Activated T-helper 1 cell treated with anti-CD3 and anti-CD28 coated beads, Interleukin-12 subunit alpha, Interleukin-12 subunit beta, Interleukin-2, Interleukin-4 antibody, amounts not matched to agents 30 ng/mL and 10 ng/mL and 1 ng/mL, durations not matched to agents 14 hours and 24 hours and 36 hours (primary cell): ENCODE measurements at regions of chr3 and their contacts with region 1.

Region 1: DNA sequence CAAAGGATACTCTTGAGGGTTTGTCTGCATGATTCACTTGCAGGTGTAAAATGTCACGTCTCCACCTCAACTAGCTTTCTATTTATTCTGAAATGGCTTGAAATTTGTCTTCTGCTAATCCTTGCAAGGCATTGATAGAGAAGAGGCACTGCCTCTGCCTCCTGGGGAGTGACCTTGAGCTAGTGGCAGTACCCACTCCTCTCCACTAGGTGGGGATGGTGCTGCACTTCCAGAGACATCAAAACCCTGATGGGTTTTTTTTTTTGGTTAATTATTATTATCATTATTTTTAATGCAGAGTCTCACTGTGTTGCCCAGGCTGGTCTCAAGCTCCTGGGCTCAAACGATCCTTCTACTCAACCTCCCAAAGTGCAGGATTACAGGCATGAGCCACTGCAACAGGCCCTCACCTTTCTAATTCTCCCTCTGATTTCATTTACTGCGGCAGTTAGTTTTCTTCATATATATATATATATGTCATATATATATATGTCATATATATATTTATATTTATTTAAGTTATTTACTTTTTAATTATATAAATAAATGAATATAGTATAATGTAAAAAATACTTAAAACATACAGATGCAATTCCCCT is 117.6 kb upstream of the EIF1B start:
- DNase-seq: peak; percentile 35
- H3K4me3 Mint-ChIP-seq: no peak overlapping the region
- H3K27ac Mint-ChIP-seq: no peak overlapping the region
- H3K4me1 Mint-ChIP-seq: no peaks in the 10 kb centered on the region
- H3K27me3 Mint-ChIP-seq: peaks cover 4% of the 10 kb centered on the region

Region 2: GRCh38 chr3:40054568-40055222 is 137.3 kb before region 1 on chr3:
- intact Hi-C with region 1: no loop called
- DNase-seq: no peak
- H3K4me3 Mint-ChIP-seq: no peak overlapping the region
- H3K27ac Mint-ChIP-seq: no peak overlapping the region
- H3K4me1 Mint-ChIP-seq: no peaks in the 10 kb centered on the region
- H3K27me3 Mint-ChIP-seq: peaks cover 2% of the 10 kb centered on the region

Region 3: GRCh38 chr3:41881233-41881821 is 1689.4 kb after region 1 on chr3:
- intact Hi-C with region 1: loop called (anchors 5 kb)
- DNase-seq: no peak
- H3K4me3 Mint-ChIP-seq: no peak overlapping the region
- H3K27ac Mint-ChIP-seq: no peak overlapping the region
- H3K4me1 Mint-ChIP-seq: no peaks in the 10 kb centered on the region
- H3K27me3 Mint-ChIP-seq: peaks cover 1% of the 10 kb centered on the region